Calu3 (cell line): ENCODE measurements at regions of chr12 and their contacts with region 1.

Region 1: DNA sequence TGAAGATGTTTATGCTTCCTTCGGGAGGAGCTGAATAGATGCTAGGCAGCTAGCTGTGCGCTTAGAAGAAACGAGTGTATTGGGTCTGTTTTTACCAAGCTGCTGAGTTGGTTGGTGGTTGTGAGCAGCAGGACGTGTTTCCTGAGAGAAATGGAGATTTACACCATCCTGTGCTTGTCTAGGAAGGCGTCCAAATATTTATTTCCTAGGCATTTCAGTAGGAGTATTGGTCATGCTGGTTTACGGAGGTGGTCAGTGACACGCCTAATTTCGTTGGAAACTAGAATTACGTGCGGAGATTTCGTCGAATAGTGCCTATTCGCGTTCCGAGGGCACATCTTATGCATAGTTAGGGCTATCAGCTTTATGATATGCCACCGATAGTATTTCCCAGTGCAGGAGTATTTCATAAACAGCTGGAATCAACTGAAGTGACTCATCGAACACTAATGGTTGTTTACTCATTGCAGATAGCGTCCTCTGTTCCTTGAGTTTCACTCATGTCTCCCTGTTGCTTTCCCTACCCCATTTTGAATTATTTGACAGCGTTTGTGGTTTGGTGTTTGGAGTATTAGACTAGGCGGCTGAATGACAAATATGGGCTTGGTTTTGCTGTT is 780 bp downstream of the TBC1D15 start:
- DNase-seq: peak; percentile 19
- H3K4me3 Mint-ChIP-seq: peak overlapping the region; percentile 91
- H3K27ac Mint-ChIP-seq: peak overlapping the region; percentile 99
- H3K4me1 Mint-ChIP-seq: peaks cover 33% of the 10 kb centered on the region
- H3K27me3 Mint-ChIP-seq: no peaks in the 10 kb centered on the region
- CTCF ChIP-seq: no peak

Region 2: GRCh38 chr12:71663561-71664294 is 176.6 kb before region 1 on chr12 and contains the start of gene ZFC3H1:
- CTCF ChIA-PET with region 1: interaction called, 3 read pairs
- intact Hi-C with region 1: loop called (anchors 5 kb)
- DNase-seq: peak; percentile 94
- H3K4me3 Mint-ChIP-seq: peak within 1 kb of the TSS; percentile 97
- H3K27ac Mint-ChIP-seq: peak within 1 kb of the TSS; percentile 98
- H3K4me1 Mint-ChIP-seq: peaks cover 17% of the 10 kb centered on the region
- H3K27me3 Mint-ChIP-seq: no peaks in the 10 kb centered on the region
- CTCF ChIP-seq: peak; percentile 23
- total RNA-seq, gene ZFC3H1: 64.0 and 66.6 TPM in 2 replicates

Region 3: DNA sequence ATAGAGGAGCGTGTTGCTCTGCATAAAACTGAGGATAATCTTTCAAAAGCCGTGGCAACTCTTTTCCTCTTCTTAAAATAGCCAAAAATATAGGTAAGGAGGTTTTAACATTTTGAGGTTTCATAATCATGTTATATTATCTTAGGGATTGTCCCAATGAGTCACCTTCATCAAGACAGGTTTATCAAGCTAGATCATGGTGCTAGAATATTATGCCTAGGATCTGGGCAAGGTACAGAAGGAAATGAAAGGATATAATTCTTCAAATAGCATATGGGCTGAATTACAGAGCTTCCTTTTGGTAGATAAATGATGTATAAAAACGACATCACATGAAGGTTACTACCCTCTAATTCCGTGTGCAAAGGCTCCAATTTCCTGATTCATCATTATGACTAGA is 29.4 kb before region 1 on chr12:
- CTCF ChIA-PET with region 1: interaction called, 4 read pairs
- intact Hi-C with region 1: loop called (anchors 2 kb)
- DNase-seq: no peak
- H3K4me3 Mint-ChIP-seq: no peak overlapping the region
- H3K27ac Mint-ChIP-seq: peak overlapping the region; percentile 29
- H3K4me1 Mint-ChIP-seq: peaks cover 35% of the 10 kb centered on the region
- H3K27me3 Mint-ChIP-seq: no peaks in the 10 kb centered on the region
- CTCF ChIP-seq: no peak

Region 4: GRCh38 chr12:71947645-71948105 is 107.3 kb after region 1 on chr12:
- CTCF ChIA-PET with region 1: no interaction called
- intact Hi-C with region 1: no loop called
- DNase-seq: peak; percentile 69
- H3K4me3 Mint-ChIP-seq: no peak overlapping the region
- H3K27ac Mint-ChIP-seq: no peak overlapping the region
- H3K4me1 Mint-ChIP-seq: no peaks in the 10 kb centered on the region
- H3K27me3 Mint-ChIP-seq: peaks cover 7% of the 10 kb centered on the region
- CTCF ChIP-seq: no peak